Left lung (tissue), 14 donors: ENCODE measurements at regions of chr14 and their contacts with region 1.

Region 1: GRCh38 chr14:95527387-95528002 is 7.4 kb upstream of the GLRX5 start:
- DNase-seq: peak in 1 of 4 donors; percentile 50
- ATAC-seq: peak; percentile 60
- H3K4me3 ChIP-seq: no peak overlapping the region
- H3K27ac ChIP-seq: peak overlapping the region; percentile 35 to 69
- H3K4me1 ChIP-seq: peaks cover 14 to 80% of the 10 kb centered on the region in 2 donors
- H3K27me3 ChIP-seq: no peaks in the 10 kb centered on the region
- CTCF ChIP-seq: peak; percentile 68 to 76

Region 2: GRCh38 chr14:95442633-95443021 is 84.9 kb before region 1 on chr14:
- intact Hi-C with region 1: loop called (anchors 5 to 10 kb)
- DNase-seq: peak; percentile 71 to 89 (median 83)
- ATAC-seq: peak; percentile 99
- H3K4me3 ChIP-seq: no peak overlapping the region
- H3K27ac ChIP-seq: no peak overlapping the region
- H3K4me1 ChIP-seq: peaks cover 0 to 7% of the 10 kb centered on the region in 2 donors
- H3K27me3 ChIP-seq: no peaks in the 10 kb centered on the region
- CTCF ChIP-seq: peak; percentile 82 to 91

Region 3: DNA sequence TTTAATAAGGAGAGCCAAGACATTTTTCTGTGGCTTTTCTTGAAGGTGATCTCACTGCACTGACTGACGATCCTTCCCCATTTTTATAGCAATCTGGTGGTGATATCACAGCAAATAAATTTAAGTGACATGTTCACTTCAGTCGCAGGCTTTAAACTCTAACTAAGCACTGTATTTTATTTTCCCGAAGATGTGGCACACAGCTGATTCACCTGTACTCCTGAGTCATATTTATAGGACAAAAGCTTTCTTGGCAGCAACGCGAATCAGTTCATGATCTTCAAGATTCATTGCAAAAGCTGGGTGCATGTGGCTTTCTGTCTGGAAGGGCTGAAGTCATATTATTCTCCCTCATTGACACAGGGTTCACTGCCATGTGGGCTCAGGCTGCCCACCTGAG is 269.3 kb after region 1 on chr14:
- intact Hi-C with region 1: no loop called
- DNase-seq: no peak
- ATAC-seq: no peak
- H3K4me3 ChIP-seq: no peak overlapping the region
- H3K27ac ChIP-seq: no peak overlapping the region
- H3K4me1 ChIP-seq: no peaks in the 10 kb centered on the region
- H3K27me3 ChIP-seq: peaks cover 0 to 10% of the 10 kb centered on the region in 2 donors
- CTCF ChIP-seq: no peak